H1 (cell line): ENCODE measurements at regions of chr1 and their contacts with region 1.

Region 1: GRCh38 chr1:160951443-160952128 is 3.0 kb downstream of the ITLN2 start:
- DNase-seq: peak; percentile 36 to 82
- H3K4me3 ChIP-seq: no peak overlapping the region
- H3K27ac ChIP-seq: no peak overlapping the region
- H3K4me1 ChIP-seq: peaks cover 0 to 9% (median 3%) of the 10 kb centered on the region in 4 experiments; a peak in 6 of 7 replicates
- H3K27me3 ChIP-seq: no peaks in the 10 kb centered on the region
- CTCF ChIP-seq: peak; percentile 85 to 97 (median 88)
- EP300 ChIP-seq: no peak
- POLR2A ChIP-seq: no peak
- RAD21 ChIP-seq: peak; percentile 77 to 87

Region 2: DNA sequence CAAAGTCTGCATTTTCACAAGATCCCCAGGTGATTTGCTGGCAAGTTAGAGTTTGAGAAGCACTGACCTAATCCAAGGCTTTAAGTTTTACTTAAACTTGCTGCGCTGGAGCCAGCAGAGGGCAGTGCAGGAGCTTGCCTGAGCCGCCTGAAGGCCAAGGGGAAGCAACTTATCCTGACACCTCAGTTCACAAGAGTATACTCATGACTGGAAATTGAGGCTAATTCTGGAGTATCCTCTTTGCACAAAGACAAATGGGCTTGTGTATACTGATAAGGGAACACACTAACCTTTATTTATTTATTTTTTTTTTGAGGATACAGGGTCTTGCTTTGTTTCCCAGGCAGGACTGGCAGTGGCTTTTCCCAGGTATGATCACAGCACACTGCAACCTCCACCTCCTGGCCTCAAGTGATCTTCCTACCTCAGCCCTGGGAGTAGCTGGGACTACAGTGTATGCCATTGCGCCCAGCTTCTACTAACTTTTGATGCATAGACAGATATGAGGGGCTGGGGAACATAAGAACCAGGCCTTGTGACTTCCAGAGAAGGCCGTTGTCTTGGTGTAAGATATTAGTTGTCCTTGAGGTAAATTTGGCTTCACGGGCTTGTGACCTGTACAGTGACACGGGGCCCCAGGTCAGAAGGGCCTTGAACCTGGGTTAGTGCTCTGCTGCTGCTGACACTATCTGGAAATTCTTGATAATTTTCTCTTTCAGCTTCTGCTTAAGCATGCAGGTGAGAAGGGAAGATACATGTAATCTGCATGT is 275.8 kb before region 1 on chr1:
- CTCF ChIA-PET with region 1: interaction called, 77 read pairs
- POLR2A ChIA-PET with region 1: no interaction called
- DNase-seq: peak; percentile 43 to 71
- H3K4me3 ChIP-seq: no peak overlapping the region
- H3K27ac ChIP-seq: no peak overlapping the region
- H3K4me1 ChIP-seq: peaks cover 16 to 27% (median 16%) of the 10 kb centered on the region in 4 experiments
- H3K27me3 ChIP-seq: no peaks in the 10 kb centered on the region
- CTCF ChIP-seq: peak; percentile 74 to 91 (median 88)
- EP300 ChIP-seq: no peak
- POLR2A ChIP-seq: no peak
- RAD21 ChIP-seq: peak; percentile 68 to 81

Region 3: GRCh38 chr1:160768295-160768657 is 183.3 kb before region 1 on chr1:
- CTCF ChIA-PET with region 1: interaction called, 22 read pairs
- POLR2A ChIA-PET with region 1: no interaction called
- DNase-seq: peak in 1 of 2 experiments; percentile 60
- H3K4me3 ChIP-seq: no peak overlapping the region
- H3K27ac ChIP-seq: no peak overlapping the region
- H3K4me1 ChIP-seq: no peaks in the 10 kb centered on the region
- H3K27me3 ChIP-seq: no peaks in the 10 kb centered on the region
- CTCF ChIP-seq: peak; percentile 82 to 89 (median 85)
- EP300 ChIP-seq: no peak
- POLR2A ChIP-seq: no peak
- RAD21 ChIP-seq: peak; percentile 78 to 81

Region 4: GRCh38 chr1:160837558-160838205 is 113.9 kb before region 1 on chr1:
- CTCF ChIA-PET with region 1: interaction called, 219 read pairs
- POLR2A ChIA-PET with region 1: interaction called, 3 read pairs
- DNase-seq: no peak
- H3K4me3 ChIP-seq: no peak overlapping the region
- H3K27ac ChIP-seq: no peak overlapping the region
- H3K4me1 ChIP-seq: peaks cover 0 to 3% (median 0%) of the 10 kb centered on the region in 4 experiments; a peak in 2 of 7 replicates
- H3K27me3 ChIP-seq: no peaks in the 10 kb centered on the region; a peak in 1 of 7 replicates
- CTCF ChIP-seq: no peak
- EP300 ChIP-seq: no peak
- POLR2A ChIP-seq: no peak
- RAD21 ChIP-seq: no peak

Region 5: GRCh38 chr1:160925652-160926241 is 25.8 kb before region 1 on chr1:
- CTCF ChIA-PET with region 1: interaction called, 14 read pairs
- POLR2A ChIA-PET with region 1: no interaction called
- DNase-seq: no peak
- H3K4me3 ChIP-seq: no peak overlapping the region
- H3K27ac ChIP-seq: no peak overlapping the region
- H3K4me1 ChIP-seq: no peaks in the 10 kb centered on the region
- H3K27me3 ChIP-seq: no peaks in the 10 kb centered on the region
- CTCF ChIP-seq: no peak
- EP300 ChIP-seq: no peak
- POLR2A ChIP-seq: no peak
- RAD21 ChIP-seq: no peak

Region 6: DNA sequence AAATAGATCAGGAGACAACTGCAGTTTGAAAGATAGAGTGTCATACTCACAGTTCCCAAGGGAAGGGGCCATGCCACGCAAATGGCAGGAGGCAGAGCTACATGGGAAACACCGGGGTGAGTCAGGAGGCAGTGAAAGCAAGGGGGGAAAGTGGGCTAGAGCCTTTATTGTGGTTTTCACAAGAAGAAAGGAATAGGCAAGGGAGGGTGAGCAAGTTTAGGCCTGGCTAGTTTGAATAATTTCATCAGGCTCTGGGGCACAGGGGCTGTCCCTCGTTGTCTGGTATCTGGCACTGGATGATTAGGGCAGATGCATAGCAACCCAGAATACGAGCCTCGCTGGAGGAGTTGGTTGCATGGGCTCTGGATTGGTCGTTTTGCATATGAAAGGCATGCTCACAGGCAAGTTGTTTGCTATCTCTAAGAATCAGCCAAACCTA is 20.1 kb after region 1 on chr1:
- CTCF ChIA-PET with region 1: interaction called, 63 read pairs
- POLR2A ChIA-PET with region 1: interaction called, 3 read pairs
- DNase-seq: no peak
- H3K4me3 ChIP-seq: peak overlapping the region in 1 of 4 experiments; percentile 34; a peak in 1 of 8 replicates
- H3K27ac ChIP-seq: no peak overlapping the region
- H3K4me1 ChIP-seq: peaks cover 4 to 13% (median 11%) of the 10 kb centered on the region in 4 experiments; a peak in 6 of 7 replicates
- H3K27me3 ChIP-seq: no peaks in the 10 kb centered on the region
- CTCF ChIP-seq: no peak
- EP300 ChIP-seq: no peak
- POLR2A ChIP-seq: no peak
- RAD21 ChIP-seq: no peak

Region 7: DNA sequence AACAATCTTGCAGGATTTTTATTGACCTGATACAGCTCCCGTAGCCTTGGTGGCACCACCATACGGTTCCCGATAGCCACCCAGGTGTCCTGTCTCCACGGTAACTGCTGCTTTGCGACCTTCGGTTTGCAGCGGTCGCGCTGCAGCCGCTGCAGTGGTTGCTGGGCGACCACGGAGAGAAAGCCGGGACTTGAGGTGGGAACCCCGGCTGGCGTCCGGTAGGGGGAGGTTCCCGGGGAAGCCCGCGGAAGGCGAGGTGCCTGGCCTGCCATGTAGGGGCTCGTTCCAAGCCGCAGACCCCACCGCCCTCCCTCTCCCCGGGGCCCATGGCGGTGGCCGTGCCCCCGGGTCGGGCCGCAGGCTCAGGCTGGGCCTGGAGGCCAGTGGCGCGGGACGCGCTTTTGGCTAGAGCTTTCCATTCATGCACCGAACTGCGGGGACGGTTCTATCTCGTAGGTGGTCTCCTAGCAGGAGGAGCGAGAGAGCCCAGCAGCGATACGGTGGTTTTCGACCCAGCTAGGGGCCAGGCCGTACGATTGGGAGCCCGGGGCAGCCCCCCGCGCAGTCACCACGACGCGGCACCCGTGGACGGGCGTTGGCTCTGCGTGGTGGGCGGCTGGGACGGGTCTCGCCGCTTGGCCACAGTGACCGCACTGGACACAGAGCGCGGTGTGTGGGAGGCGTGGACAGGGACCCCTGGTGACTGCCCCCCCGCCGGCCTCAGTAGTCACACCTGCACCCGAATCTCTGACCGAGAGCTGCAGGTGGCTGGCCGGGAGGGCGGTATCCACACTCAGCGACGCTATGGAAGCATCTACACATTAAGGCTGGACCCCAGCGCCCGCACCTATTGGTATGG is 146.9 kb after region 1 on chr1 and contains the start of gene KLHDC9:
- CTCF ChIA-PET with region 1: interaction called, 19 read pairs
- POLR2A ChIA-PET with region 1: no interaction called
- DNase-seq: peak in 1 of 2 experiments; percentile 87
- H3K4me3 ChIP-seq: peak within 1 kb of the TSS; percentile 63 to 89 (median 71)
- H3K27ac ChIP-seq: no peak within 1 kb of the TSS
- H3K4me1 ChIP-seq: peaks cover 0 to 6% (median 0%) of the 10 kb centered on the region in 4 experiments; a peak in 2 of 7 replicates
- H3K27me3 ChIP-seq: no peaks in the 10 kb centered on the region
- CTCF ChIP-seq: peak in 2 of 3 experiments; percentile 30 to 37; a peak in 3 of 4 replicates
- EP300 ChIP-seq: peak in 1 of 2 experiments; percentile 33; a peak in 1 of 3 replicates
- POLR2A ChIP-seq: peak in 1 of 2 experiments; percentile 51; a peak in 1 of 3 replicates
- RAD21 ChIP-seq: peak; percentile 5 to 12; a peak in 1 of 4 replicates
- total RNA-seq, gene KLHDC9: 4.0 and 6.5 TPM in 2 replicates

Region 8: GRCh38 chr1:161165742-161166668 is 214.4 kb after region 1 on chr1 and contains the start of gene PPOX:
- CTCF ChIA-PET with region 1: no interaction called
- POLR2A ChIA-PET with region 1: no interaction called
- DNase-seq: peak; percentile 90 to 94
- H3K4me3 ChIP-seq: peak within 1 kb of the TSS; percentile 64 to 87 (median 82)
- H3K27ac ChIP-seq: peak within 1 kb of the TSS; percentile 47
- H3K4me1 ChIP-seq: peaks cover 0 to 7% (median 5%) of the 10 kb centered on the region in 4 experiments; a peak in 4 of 7 replicates
- H3K27me3 ChIP-seq: no peaks in the 10 kb centered on the region
- CTCF ChIP-seq: peak; percentile 45 to 55 (median 50)
- EP300 ChIP-seq: 0 out of 3 replicates have a peak, but pooled peaks of 1 of the 2 experiments have one; percentile 14
- POLR2A ChIP-seq: peak; percentile 56 to 84
- RAD21 ChIP-seq: no peak
- total RNA-seq, gene PPOX: 32.1 and 40.4 TPM in 2 replicates

Region 9: GRCh38 chr1:161177112-161177935 is 225.7 kb after region 1 on chr1 and contains the start of gene B4GALT3:
- CTCF ChIA-PET with region 1: no interaction called
- POLR2A ChIA-PET with region 1: no interaction called
- DNase-seq: peak in 1 of 2 experiments; percentile 100
- H3K4me3 ChIP-seq: peak within 1 kb of the TSS; percentile 66 to 96 (median 84)
- H3K27ac ChIP-seq: peak within 1 kb of the TSS; percentile 88
- H3K4me1 ChIP-seq: peaks cover 0 to 13% (median under 1%) of the 10 kb centered on the region in 4 experiments; a peak in 3 of 7 replicates
- H3K27me3 ChIP-seq: no peaks in the 10 kb centered on the region
- CTCF ChIP-seq: peak; percentile 32 to 40 (median 38); a peak in 3 of 4 replicates
- EP300 ChIP-seq: no peak
- POLR2A ChIP-seq: peak; percentile 89 to 97
- RAD21 ChIP-seq: peak in 1 of 2 experiments; percentile 23; a peak in 2 of 4 replicates
- total RNA-seq, gene B4GALT3: 42.3 and 45.5 TPM in 2 replicates